Activated CD8-positive, alpha-beta T cell treated with anti-CD3 and anti-CD28 coated beads for 36 hours (primary cell): ENCODE measurements at regions of chr6 and their contacts with region 1.

Region 1: GRCh38 chr6:27078734-27079357 is 168.7 kb upstream of the PRSS16 start:
- DNase-seq: peak; percentile 59
- ATAC-seq: peak; percentile 81
- H3K4me3 Mint-ChIP-seq: peak overlapping the region; percentile 73
- H3K27ac Mint-ChIP-seq: no peak overlapping the region
- H3K4me1 Mint-ChIP-seq: peaks cover 3% of the 10 kb centered on the region
- H3K27me3 Mint-ChIP-seq: peaks cover 35% of the 10 kb centered on the region
- CTCF ChIP-seq: peak; percentile 80

Region 2: DNA sequence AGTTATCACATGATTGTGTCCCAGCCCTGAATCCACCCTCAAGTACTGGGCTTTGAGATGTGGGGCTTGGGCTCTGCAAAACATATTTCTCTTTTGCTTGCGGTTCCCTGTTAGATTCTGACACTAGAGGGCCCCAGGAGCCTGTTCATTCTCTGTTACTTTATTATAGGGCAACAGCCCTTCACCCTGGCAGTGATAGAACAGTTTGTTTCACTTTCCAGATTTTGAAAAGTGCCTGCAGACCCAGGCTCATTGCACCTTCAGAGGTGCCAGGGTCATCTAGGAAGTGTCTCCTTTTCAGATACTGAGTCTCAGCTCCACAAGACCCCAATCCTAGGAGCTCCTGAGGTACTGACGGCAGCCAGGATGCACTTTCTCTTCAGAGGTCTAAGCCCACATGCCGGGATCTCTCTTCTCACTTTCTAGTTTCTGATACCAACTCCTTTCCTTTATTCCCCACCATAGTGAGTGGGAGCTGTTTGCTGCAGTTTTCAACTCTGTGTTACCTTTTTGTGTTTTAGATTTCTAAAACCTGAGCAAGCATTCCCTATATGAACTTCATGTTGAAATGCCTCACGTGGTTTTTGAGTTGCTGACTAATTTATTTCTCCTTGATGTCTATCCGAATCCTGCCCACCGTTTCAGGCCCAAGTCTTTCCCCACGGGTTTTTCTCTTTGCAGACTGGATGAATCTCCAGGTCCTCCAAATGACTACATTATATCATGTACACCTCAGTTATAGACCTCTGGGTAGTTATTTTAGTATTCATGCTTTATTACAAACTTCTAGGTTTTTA is 471.2 kb before region 1 on chr6:
- CTCF ChIA-PET with region 1: interaction called, 11 read pairs
- POLR2A ChIA-PET with region 1: no interaction called
- intact Hi-C with region 1: loop called (anchors 2 kb)
- DNase-seq: peak; percentile 81
- ATAC-seq: peak; percentile 92
- H3K4me3 Mint-ChIP-seq: peak overlapping the region; percentile 60
- H3K27ac Mint-ChIP-seq: peak overlapping the region; percentile 63
- H3K4me1 Mint-ChIP-seq: peaks cover 30% of the 10 kb centered on the region
- H3K27me3 Mint-ChIP-seq: peaks cover 5% of the 10 kb centered on the region
- CTCF ChIP-seq: peak; percentile 74

Region 3: GRCh38 chr6:27205375-27206278 is 126.8 kb after region 1 on chr6:
- CTCF ChIA-PET with region 1: no interaction called
- POLR2A ChIA-PET with region 1: no interaction called
- intact Hi-C with region 1: no loop called
- DNase-seq: peak; percentile 67
- ATAC-seq: peak; percentile 61
- H3K4me3 Mint-ChIP-seq: peak overlapping the region; percentile 35
- H3K27ac Mint-ChIP-seq: no peak overlapping the region
- H3K4me1 Mint-ChIP-seq: peaks cover 13% of the 10 kb centered on the region
- H3K27me3 Mint-ChIP-seq: peaks cover 28% of the 10 kb centered on the region
- CTCF ChIP-seq: no peak

Region 4: GRCh38 chr6:27795697-27796494 is 717.0 kb after region 1 on chr6:
- CTCF ChIA-PET with region 1: no interaction called
- POLR2A ChIA-PET with region 1: no interaction called
- intact Hi-C with region 1: no loop called
- DNase-seq: peak; percentile 68
- ATAC-seq: peak; percentile 69
- H3K4me3 Mint-ChIP-seq: no peak overlapping the region
- H3K27ac Mint-ChIP-seq: no peak overlapping the region
- H3K4me1 Mint-ChIP-seq: peaks cover 30% of the 10 kb centered on the region
- H3K27me3 Mint-ChIP-seq: peaks cover 10% of the 10 kb centered on the region
- CTCF ChIP-seq: peak; percentile 72